B cell (primary cell): ENCODE measurements at regions of chr3 and their contacts with region 1.

Region 1: GRCh38 chr3:187382609-187383151 is 14.5 kb downstream of the RTP4 start:
- DNase-seq: no peak
- ATAC-seq: no peak
- H3K4me3 ChIP-seq: no peak overlapping the region
- H3K4me3 Mint-ChIP-seq: no peak overlapping the region
- H3K27ac ChIP-seq: no peak overlapping the region
- H3K27ac Mint-ChIP-seq: no peak overlapping the region
- H3K4me1 ChIP-seq: no peaks in the 10 kb centered on the region
- H3K4me1 Mint-ChIP-seq: no peaks in the 10 kb centered on the region
- H3K27me3 ChIP-seq: peaks cover 0 to 7% (median 0%) of the 10 kb centered on the region in 4 experiments
- H3K27me3 Mint-ChIP-seq: peaks cover 8% of the 10 kb centered on the region
- CTCF ChIP-seq: no peak

Region 2: DNA sequence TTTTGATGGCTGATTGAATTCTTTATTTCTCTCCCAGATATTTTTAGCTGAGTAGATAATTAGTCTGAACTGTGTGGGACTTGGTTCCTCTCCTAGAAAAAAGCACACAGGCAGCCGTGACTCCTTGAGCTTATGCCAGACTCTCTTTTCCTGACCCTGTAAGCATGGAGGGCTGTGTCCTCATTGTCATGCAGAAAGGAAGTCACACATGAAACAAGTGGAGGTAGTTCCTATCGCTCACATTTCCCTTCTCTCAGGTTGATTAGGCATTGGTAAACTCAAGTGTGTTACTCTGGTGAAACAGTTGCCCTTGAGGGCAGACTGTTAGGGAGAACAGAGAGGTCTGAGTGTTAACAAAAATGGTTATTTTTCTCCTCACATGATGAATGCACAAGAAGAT is 20.8 kb before region 1 on chr3:
- CTCF ChIA-PET with region 1: no interaction called
- POLR2A ChIA-PET with region 1: no interaction called
- intact Hi-C with region 1: loop called (anchors 2 kb)
- DNase-seq: no peak
- ATAC-seq: no peak
- H3K4me3 ChIP-seq: no peak overlapping the region
- H3K4me3 Mint-ChIP-seq: no peak overlapping the region
- H3K27ac ChIP-seq: no peak overlapping the region
- H3K27ac Mint-ChIP-seq: no peak overlapping the region
- H3K4me1 ChIP-seq: peaks cover 0 to 4% of the 10 kb centered on the region in 2 donors
- H3K4me1 Mint-ChIP-seq: no peaks in the 10 kb centered on the region
- H3K27me3 ChIP-seq: no peaks in the 10 kb centered on the region
- H3K27me3 Mint-ChIP-seq: peaks cover 3% of the 10 kb centered on the region
- CTCF ChIP-seq: no peak